CD8-positive, alpha-beta T cell (primary cell): ENCODE measurements at regions of chrX and their contacts with region 1.

Region 1: GRCh38 chrX:135521405-135522189 is 1.1 kb downstream of the INTS6L start:
- DNase-seq: peak; percentile 64 to 94 (median 79)
- ATAC-seq: peak; percentile 70
- H3K4me3 ChIP-seq: peak overlapping the region; percentile 73 to 85
- H3K4me3 Mint-ChIP-seq: peak overlapping the region; percentile 99
- H3K27ac ChIP-seq: peak overlapping the region; percentile 61 to 84
- H3K27ac Mint-ChIP-seq: peak overlapping the region; percentile 88
- H3K4me1 ChIP-seq: peaks cover 4% of the 10 kb centered on the region
- H3K4me1 Mint-ChIP-seq: peaks cover 46% of the 10 kb centered on the region
- H3K27me3 ChIP-seq: no peaks in the 10 kb centered on the region
- H3K27me3 Mint-ChIP-seq: no peaks in the 10 kb centered on the region
- CTCF ChIP-seq: no peak

Region 2: GRCh38 chrX:134807039-134807731 is 714.4 kb before region 1 on chrX:
- CTCF ChIA-PET with region 1: no interaction called
- POLR2A ChIA-PET with region 1: no interaction called
- intact Hi-C with region 1: loop called (anchors 2 to 5 kb)
- DNase-seq: peak; percentile 70 to 97 (median 84)
- ATAC-seq: peak; percentile 86
- H3K4me3 ChIP-seq: peak overlapping the region; percentile 92 to 95
- H3K4me3 Mint-ChIP-seq: peak overlapping the region; percentile 97
- H3K27ac ChIP-seq: peak overlapping the region; percentile 99
- H3K27ac Mint-ChIP-seq: peak overlapping the region; percentile 99
- H3K4me1 ChIP-seq: no peaks in the 10 kb centered on the region
- H3K4me1 Mint-ChIP-seq: peaks cover 24% of the 10 kb centered on the region
- H3K27me3 ChIP-seq: no peaks in the 10 kb centered on the region
- H3K27me3 Mint-ChIP-seq: no peaks in the 10 kb centered on the region
- CTCF ChIP-seq: no peak

Region 3: DNA sequence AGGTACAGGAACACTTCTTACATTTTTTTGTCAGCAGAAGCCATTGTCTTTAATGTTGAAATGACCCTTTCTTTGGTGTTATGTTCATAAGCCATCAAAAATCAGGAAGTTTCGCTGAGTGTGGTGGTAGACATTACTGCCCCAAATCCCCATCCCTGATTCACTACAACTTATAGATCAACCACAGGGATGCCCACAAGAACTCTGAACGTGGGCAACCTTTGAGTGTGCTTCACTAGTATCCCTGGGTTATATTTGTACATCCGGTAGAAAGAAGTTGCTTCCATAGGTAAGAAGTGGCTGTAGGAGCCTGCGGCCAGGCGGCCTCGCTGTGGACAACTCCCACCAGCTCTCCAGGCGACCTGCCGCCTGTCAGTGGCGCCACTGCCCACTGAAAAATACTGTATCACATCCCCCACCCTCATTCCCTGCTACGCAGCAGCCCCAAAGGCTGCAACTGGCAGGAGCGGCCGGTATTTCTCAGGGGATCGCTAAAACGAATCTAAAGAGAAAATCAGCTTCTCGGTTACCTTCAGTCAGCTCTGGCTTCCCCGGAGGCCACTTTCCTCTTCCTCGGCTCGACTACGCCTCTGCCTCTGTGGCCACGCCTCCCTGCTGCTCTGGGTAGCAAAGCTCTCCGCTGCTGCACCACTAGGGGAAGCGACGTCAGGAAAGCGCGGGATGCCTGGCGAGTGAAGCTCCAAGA is 226.2 kb before region 1 on chrX:
- CTCF ChIA-PET with region 1: no interaction called
- POLR2A ChIA-PET with region 1: no interaction called
- intact Hi-C with region 1: loop called in 1 of 2 experiments (anchors 5 kb)
- DNase-seq: peak; percentile 18 to 73 (median 60)
- ATAC-seq: peak; percentile 96
- H3K4me3 ChIP-seq: peak overlapping the region; percentile 65 to 68
- H3K4me3 Mint-ChIP-seq: peak overlapping the region; percentile 92
- H3K27ac ChIP-seq: peak overlapping the region; percentile 64 to 74
- H3K27ac Mint-ChIP-seq: peak overlapping the region; percentile 89
- H3K4me1 ChIP-seq: peaks cover 14% of the 10 kb centered on the region
- H3K4me1 Mint-ChIP-seq: peaks cover 25% of the 10 kb centered on the region
- H3K27me3 ChIP-seq: no peaks in the 10 kb centered on the region
- H3K27me3 Mint-ChIP-seq: no peaks in the 10 kb centered on the region
- CTCF ChIP-seq: no peak

Region 4: DNA sequence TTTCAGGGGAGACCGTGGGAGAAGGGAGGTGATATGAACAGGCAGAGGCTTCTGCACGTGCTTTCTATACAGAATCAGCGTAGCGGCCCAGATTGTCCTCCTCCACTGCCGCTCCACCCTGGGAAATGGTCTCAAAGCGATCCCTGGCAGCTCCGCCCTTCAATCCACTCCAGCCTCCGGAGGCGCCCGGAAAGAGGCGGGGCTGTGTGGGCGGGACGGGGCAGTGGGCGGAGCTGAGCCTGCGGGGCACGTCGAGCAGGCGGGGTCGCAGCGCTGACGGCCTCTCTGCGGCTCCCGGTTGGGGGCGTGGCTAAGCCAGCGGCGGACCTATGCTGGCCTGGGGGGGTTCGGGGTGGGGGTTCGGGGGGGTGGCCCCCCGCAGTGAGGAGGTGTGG is 100.1 kb before region 1 on chrX:
- CTCF ChIA-PET with region 1: no interaction called
- POLR2A ChIA-PET with region 1: no interaction called
- intact Hi-C with region 1: loop called (anchors 1 to 2 kb)
- DNase-seq: peak; percentile 73 to 92 (median 86)
- ATAC-seq: peak; percentile 91
- H3K4me3 ChIP-seq: peak overlapping the region; percentile 36 to 41
- H3K4me3 Mint-ChIP-seq: peak overlapping the region; percentile 78
- H3K27ac ChIP-seq: no peak overlapping the region
- H3K27ac Mint-ChIP-seq: peak overlapping the region; percentile 47
- H3K4me1 ChIP-seq: no peaks in the 10 kb centered on the region
- H3K4me1 Mint-ChIP-seq: peaks cover 6% of the 10 kb centered on the region
- H3K27me3 ChIP-seq: no peaks in the 10 kb centered on the region
- H3K27me3 Mint-ChIP-seq: no peaks in the 10 kb centered on the region
- CTCF ChIP-seq: no peak

Region 5: DNA sequence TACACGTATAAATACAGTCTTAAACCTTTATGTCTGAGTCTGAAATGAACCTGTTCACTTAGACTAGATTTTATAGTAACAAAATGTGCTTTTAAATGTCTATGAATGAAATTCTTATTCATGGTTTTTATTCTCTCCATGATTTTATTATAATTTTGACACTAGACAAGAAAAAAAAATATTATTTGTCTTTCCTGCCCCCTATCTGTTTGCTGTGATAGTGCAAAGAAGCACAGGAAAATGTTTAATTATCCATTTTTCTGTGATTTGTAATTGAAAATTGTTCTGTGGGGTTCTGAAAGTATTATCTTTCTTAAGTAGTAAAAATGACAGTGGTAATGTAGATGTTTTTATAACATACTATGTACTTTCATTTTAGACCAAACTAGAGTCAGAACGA is 50.8 kb after region 1 on chrX:
- CTCF ChIA-PET with region 1: interaction called, 3 read pairs
- POLR2A ChIA-PET with region 1: no interaction called
- intact Hi-C with region 1: loop called in 1 of 2 experiments (anchors 10 kb)
- DNase-seq: peak in 1 of 9 experiments; percentile 8
- ATAC-seq: no peak
- H3K4me3 ChIP-seq: no peak overlapping the region
- H3K4me3 Mint-ChIP-seq: no peak overlapping the region
- H3K27ac ChIP-seq: no peak overlapping the region
- H3K27ac Mint-ChIP-seq: no peak overlapping the region
- H3K4me1 ChIP-seq: no peaks in the 10 kb centered on the region
- H3K4me1 Mint-ChIP-seq: peaks cover 5% of the 10 kb centered on the region
- H3K27me3 ChIP-seq: no peaks in the 10 kb centered on the region
- H3K27me3 Mint-ChIP-seq: no peaks in the 10 kb centered on the region
- CTCF ChIP-seq: peak; percentile 49

Region 6: DNA sequence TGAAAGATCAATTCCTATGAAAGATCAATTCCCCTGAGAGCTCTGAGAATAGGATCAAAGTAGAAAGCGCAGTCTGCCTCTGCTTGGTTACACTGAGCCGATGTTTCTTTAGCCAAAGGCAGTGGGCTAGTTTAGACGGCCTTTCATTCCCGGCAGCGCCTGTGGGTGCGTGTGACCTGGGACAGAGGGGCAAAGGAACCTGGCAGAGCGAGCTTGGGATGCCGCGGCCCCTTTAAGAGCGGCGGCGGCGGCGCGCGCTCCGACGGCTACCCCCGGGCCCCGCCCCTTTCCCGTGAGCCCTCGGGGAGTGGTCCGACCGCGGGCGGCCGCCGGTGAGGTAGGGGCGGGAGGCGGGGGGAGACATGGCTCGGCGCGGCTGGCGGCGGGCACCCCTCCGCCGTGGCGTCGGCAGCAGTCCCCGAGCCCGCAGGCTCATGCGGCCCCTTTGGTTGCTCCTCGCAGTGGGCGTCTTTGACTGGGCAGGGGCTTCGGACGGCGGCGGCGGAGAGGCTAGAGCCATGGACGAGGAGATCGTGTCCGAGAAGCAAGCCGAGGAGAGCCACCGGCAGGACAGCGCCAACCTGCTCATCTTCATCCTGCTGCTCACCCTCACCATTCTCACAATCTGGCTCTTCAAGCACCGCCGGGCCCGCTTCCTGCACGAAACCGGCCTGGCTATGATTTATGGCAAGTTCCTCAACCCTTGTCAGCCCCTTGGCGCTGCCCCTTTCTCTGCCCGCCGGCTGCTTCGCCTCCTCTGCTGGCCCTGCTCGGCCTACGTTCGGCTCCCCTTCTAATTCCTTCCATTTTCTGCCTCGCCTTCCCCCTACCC is 463.8 kb after region 1 on chrX and contains the start of gene SLC9A6:
- CTCF ChIA-PET with region 1: no interaction called
- POLR2A ChIA-PET with region 1: no interaction called
- intact Hi-C with region 1: loop called in 1 of 2 experiments (anchors 5 kb)
- DNase-seq: peak in 8 of 9 experiments; percentile 46 to 80 (median 68)
- ATAC-seq: peak; percentile 88
- H3K4me3 ChIP-seq: peak within 1 kb of the TSS; percentile 71 to 83
- H3K4me3 Mint-ChIP-seq: peak within 1 kb of the TSS; percentile 91
- H3K27ac ChIP-seq: peak within 1 kb of the TSS; percentile 64 to 71
- H3K27ac Mint-ChIP-seq: peak within 1 kb of the TSS; percentile 93
- H3K4me1 ChIP-seq: peaks cover 26% of the 10 kb centered on the region
- H3K4me1 Mint-ChIP-seq: peaks cover 64% of the 10 kb centered on the region
- H3K27me3 ChIP-seq: no peaks in the 10 kb centered on the region
- H3K27me3 Mint-ChIP-seq: no peaks in the 10 kb centered on the region
- CTCF ChIP-seq: no peak
- total RNA-seq, gene SLC9A6: 15.9 to 18.7 TPM

Region 7: DNA sequence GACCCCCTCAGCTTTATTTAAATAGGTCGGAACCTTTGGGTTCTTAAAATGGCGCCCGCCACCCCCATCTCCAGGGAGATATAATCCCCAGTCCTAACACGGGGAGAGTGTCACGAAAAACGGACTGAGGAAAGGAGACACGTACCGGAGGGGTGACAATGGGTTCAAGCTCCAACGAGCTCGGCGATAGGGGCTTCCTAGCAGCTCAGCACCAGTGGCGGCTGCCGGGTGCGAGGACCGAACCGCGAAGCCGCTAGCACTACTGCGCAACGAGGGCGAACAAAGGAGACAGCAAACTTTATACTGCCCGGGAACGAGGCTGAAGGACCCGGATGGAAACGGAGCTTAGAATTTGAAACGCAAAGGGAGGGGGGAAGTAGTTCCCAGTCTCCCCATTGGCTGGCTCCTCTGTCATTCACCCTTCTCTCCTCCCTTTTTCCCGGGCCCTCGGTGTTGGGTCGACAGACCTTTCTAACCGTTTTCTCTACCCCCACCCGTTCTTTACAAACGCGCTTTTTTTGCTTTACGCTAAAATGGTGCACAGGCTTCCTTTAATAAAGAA is 1358.9 kb after region 1 on chrX and contains the start of gene RBMX:
- CTCF ChIA-PET with region 1: no interaction called
- POLR2A ChIA-PET with region 1: no interaction called
- intact Hi-C with region 1: loop called (anchors 2 to 10 kb)
- DNase-seq: peak; percentile 78 to 95 (median 90)
- ATAC-seq: peak; percentile 82
- H3K4me3 ChIP-seq: peak within 1 kb of the TSS; percentile 86 to 90
- H3K4me3 Mint-ChIP-seq: peak within 1 kb of the TSS; percentile 97
- H3K27ac ChIP-seq: peak within 1 kb of the TSS; percentile 88 to 93
- H3K27ac Mint-ChIP-seq: peak within 1 kb of the TSS; percentile 98
- H3K4me1 ChIP-seq: peaks cover 16% of the 10 kb centered on the region
- H3K4me1 Mint-ChIP-seq: peaks cover 23% of the 10 kb centered on the region
- H3K27me3 ChIP-seq: no peaks in the 10 kb centered on the region
- H3K27me3 Mint-ChIP-seq: no peaks in the 10 kb centered on the region
- CTCF ChIP-seq: no peak
- total RNA-seq, gene RBMX: 306 to 307 TPM